ENCODE measurements at regions of chr1 and their contacts with region 1.

Region 1: GRCh38 chr1:185559684-185560331 is 174.4 kb upstream of the HMCN1 start:
- DNase-seq: peak; percentile 82
- H3K4me3 Mint-ChIP-seq: no peak overlapping the region
- H3K27ac Mint-ChIP-seq: peak overlapping the region; percentile 84
- H3K4me1 Mint-ChIP-seq: peaks cover 42% of the 10 kb centered on the region
- H3K27me3 Mint-ChIP-seq: no peaks in the 10 kb centered on the region

Region 2: DNA sequence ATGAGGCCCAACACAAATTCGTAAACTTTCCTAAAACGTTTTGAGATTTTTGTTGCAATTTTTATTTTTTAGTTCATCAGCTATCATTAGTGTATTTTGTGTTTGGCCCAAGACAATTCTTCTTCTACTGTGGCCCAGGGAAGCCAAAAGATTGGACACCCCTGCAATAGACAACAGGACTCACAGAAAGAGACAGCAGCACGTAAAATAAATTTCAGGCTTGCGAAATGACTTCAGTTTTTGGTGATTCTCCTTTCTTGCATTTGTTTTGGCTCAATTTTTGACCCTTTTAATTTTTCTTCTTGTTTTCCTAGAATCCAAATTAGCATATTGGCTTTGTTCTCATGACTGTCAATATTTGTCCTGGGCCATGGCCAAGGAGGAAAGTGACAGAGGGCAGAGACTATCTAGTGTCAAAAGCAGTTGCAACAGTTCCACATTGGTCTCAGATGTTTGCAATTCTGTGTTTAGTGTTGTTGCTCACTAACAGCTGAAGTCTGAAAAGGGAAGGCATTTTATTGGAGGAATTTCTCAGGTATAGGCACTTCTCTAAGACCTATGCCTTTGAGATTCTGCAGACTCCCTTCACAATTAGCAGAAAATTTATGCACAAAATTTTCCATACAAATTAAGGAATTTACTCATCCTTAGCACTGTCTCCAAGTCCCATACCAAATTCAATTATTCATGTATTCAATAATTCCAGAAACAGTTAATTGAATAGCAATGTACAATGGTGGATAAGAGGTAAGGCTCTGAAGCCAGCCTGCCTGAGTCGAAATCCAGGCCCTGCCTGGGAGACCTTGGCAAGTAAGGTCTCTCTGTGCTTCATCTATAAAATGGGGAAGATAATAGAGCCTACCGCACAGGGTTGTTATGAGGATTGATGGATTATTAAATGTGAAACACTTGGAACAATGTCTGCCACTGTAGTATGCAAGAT is 81.9 kb before region 1 on chr1:
- CTCF ChIA-PET with region 1: no interaction called
- POLR2A ChIA-PET with region 1: no interaction called
- DNase-seq: no peak
- H3K4me3 Mint-ChIP-seq: no peak overlapping the region
- H3K27ac Mint-ChIP-seq: no peak overlapping the region
- H3K4me1 Mint-ChIP-seq: peaks cover 7% of the 10 kb centered on the region
- H3K27me3 Mint-ChIP-seq: no peaks in the 10 kb centered on the region

Region 3: DNA sequence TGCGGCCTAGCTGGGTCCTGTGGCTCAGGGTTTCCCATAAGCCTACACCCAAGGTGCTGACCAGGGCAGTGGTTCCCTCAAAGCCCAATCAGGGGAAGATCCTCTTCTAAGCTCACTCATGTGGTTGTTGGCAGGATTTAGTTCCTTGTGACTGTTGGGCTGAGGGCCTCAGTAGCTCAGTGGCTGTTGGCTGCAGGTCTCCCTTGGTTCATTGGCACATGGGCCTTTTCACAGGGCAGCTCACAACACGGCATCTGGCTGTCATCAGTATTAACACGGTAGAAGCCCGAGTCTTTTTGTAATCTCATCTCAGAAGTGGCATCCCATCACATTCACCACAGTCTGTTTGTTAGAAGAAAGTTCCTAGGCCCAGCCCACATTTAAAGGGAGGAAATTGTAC is 13.8 kb before region 1 on chr1:
- CTCF ChIA-PET with region 1: interaction called, 18 read pairs
- POLR2A ChIA-PET with region 1: no interaction called
- DNase-seq: no peak
- H3K4me3 Mint-ChIP-seq: no peak overlapping the region
- H3K27ac Mint-ChIP-seq: no peak overlapping the region
- H3K4me1 Mint-ChIP-seq: no peaks in the 10 kb centered on the region
- H3K27me3 Mint-ChIP-seq: no peaks in the 10 kb centered on the region

Measured in activated CD4-positive, alpha-beta T cell treated with anti-CD3 and anti-CD28 coated beads, Interleukin-2, amount 10 ng/mL, durations not matched to agents 7 days and 5 days (primary cell).